IMR-90 (cell line): ENCODE measurements at regions of chr10 and their contacts with region 1.

Region 1: DNA sequence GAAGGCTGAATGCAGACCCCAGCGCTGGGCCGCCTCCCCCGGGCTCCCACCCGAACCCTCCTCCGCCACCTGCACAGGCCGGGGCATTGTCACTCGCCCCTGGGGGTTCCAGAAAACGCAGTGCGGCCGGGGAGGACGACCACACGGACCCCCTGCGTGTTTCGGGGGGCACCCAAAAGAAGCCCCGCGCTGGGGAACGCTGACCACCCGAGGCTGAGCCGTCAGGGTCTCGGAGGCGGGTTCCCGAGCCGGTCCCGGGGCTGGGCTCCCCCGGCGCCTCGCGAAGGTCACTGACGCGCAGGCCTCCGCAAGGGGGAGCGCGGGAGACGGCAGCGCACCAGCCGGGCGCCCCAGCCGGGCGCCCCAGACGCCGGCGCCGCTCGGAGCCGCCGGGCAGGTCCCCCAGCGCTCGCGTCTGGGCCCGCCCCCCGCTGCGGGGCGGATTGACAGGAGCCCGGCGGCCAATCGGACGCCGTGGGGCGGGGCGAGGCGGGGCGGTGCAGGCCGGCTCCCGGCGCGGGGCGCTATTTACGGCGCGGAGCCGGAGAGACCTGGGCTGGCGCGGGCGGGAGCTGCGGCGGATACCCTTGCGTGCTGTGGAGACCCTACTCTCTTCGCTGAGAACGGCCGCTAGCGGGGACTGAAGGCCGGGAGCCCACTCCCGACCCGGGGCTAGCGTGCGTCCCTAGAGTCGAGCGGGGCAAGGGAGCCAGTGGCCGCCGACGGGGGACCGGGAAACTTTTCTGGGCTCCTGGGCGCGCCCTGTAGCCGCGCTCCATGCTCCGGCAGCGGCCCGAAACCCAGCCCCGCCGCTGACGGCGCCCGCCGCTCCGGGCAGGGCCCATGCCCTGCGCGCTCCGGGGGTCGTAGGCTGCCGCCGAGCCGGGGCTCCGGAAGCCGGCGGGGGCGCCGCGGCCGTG is at the start of gene BAMBI:
- DNase-seq: peak; percentile 89
- ATAC-seq: peak; percentile 96
- H3K4me3 ChIP-seq: peak within 1 kb of the TSS; percentile 89
- H3K27ac ChIP-seq: peak within 1 kb of the TSS; percentile 44
- H3K4me1 ChIP-seq: peaks cover 6% of the 10 kb centered on the region
- H3K27me3 ChIP-seq: peaks cover 34% of the 10 kb centered on the region
- CTCF ChIP-seq: peak; percentile 83
- POLR2A ChIP-seq: peak; percentile 97
- RAD21 ChIP-seq: peak; percentile 78
- total RNA-seq, gene BAMBI: 19.4 and 20.8 TPM in 2 replicates

Region 2: DNA sequence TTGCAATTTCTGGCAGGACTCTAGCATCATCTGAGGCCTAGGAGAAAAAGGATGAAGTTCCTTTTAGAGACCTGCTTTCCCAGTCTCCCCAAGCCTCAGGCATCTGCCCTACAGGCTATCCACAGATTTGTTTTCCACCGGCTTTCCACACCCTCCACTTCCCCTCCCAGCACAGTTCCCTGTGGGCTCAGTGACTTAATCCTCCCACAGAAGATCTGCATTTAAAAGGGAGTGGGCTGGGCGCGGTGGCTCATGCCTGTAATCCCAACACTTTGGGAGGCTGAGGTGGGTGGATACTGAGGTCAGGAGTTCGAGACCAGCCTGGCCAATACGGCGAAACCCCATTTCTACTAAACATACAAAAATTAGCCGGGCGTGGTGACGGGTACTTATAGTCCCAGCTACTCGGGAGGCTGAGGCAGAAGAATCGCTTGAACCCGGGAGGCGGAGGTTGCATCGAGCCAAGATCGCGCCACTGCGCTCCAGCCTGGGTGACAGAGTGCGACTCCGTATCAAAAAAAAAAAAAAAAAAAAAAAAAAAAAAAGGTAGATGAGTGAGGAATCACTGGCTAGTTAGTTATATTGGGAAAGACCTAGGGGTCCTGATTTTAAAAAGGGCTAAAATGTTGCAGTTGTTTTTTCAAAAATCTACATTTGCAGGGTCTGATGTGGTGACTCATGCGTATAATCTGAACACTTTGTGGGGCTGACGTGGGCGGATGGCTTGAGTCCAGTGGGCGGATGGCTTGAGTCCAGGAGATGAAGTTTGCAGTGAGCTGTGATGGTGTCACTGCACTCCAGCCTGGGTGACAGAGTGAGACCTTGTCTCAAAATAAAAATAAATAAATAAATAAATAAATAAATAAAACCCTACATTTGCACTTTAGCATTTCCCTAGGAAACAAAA is 119.6 kb after region 1 on chr10:
- CTCF ChIA-PET with region 1: no interaction called
- POLR2A ChIA-PET with region 1: no interaction called
- dilution Hi-C with region 1: no loop called
- in situ Hi-C with region 1: loop called (anchors 25 kb)
- intact Hi-C with region 1: no loop called
- DNase-seq: peak; percentile 83
- ATAC-seq: peak; percentile 35; the same call in 1 of the 2 replicates
- H3K4me3 ChIP-seq: no peak overlapping the region
- H3K27ac ChIP-seq: no peak overlapping the region
- H3K4me1 ChIP-seq: peaks cover 2% of the 10 kb centered on the region; the same call in 1 of the 2 replicates
- H3K27me3 ChIP-seq: peaks cover 8% of the 10 kb centered on the region
- CTCF ChIP-seq: no peak
- POLR2A ChIP-seq: no peak
- RAD21 ChIP-seq: no peak

Region 3: DNA sequence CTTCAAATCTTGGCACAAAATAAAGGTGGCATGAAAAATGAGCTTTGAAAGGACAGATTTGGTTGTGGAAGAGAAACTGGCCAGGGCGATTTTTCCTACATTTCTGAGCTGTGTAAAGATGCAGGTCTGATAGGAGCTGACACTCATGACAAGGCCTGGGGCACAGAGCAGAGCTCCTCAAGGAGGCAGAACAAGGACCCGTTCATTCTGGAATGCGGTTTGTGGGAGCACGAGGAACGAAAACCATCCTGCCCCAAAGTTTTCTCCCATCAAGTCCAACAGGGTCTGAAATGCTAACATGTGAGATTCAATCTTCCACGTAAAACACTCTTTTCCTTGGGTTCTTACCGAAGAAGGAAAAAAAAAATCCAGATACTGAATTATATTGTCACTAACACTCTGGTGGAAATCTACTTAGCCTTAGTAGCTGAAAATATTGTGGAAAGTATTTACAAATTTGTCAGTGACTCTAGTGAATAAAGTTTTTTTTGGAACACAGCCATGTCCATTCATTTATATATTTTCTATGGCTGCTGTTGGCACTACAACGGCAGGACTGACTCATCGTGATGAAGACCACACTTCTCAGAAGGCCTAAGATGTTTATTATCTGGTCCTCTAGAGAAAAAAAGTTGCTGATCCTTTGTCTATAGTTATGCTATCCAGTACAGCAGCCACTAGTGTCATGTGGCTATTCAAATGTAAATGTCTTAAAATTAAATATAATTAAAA is 215.8 kb after region 1 on chr10:
- CTCF ChIA-PET with region 1: no interaction called
- POLR2A ChIA-PET with region 1: no interaction called
- dilution Hi-C with region 1: no loop called
- in situ Hi-C with region 1: no loop called
- intact Hi-C with region 1: loop called (anchors 5 kb)
- DNase-seq: peak; percentile 86
- ATAC-seq: peak; percentile 88
- H3K4me3 ChIP-seq: no peak overlapping the region
- H3K27ac ChIP-seq: no peak overlapping the region
- H3K4me1 ChIP-seq: peaks cover 6% of the 10 kb centered on the region
- H3K27me3 ChIP-seq: no peaks in the 10 kb centered on the region
- CTCF ChIP-seq: no peak
- POLR2A ChIP-seq: no peak
- RAD21 ChIP-seq: no peak

Region 4: DNA sequence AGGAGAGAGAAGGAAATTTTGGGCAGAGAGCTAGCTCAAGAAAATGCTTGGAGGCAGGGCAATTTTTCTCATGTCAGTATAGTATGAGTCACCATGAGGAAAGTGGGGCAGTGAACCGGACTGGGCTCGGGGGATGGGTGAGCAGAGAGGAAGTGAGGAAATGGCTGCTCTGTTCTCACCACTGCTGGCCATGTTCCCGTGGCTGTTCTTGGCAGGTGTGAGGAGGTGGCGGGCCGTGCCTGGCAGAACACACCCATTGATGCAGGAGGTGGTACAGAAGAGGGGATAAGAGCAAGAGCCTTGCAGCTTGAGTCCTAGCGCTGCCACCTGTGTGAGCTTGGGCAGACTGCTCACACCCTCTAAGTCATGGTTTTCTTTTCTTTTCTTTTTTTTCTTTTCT is 307.2 kb after region 1 on chr10:
- CTCF ChIA-PET with region 1: no interaction called
- POLR2A ChIA-PET with region 1: no interaction called
- dilution Hi-C with region 1: no loop called
- in situ Hi-C with region 1: loop called (anchors 10 kb)
- intact Hi-C with region 1: no loop called
- DNase-seq: peak; percentile 85
- ATAC-seq: peak; percentile 99
- H3K4me3 ChIP-seq: no peak overlapping the region
- H3K27ac ChIP-seq: no peak overlapping the region
- H3K4me1 ChIP-seq: peaks cover 4% of the 10 kb centered on the region
- H3K27me3 ChIP-seq: no peaks in the 10 kb centered on the region; the same call in 1 of the 2 replicates
- CTCF ChIP-seq: no peak
- POLR2A ChIP-seq: no peak
- RAD21 ChIP-seq: peak; percentile 37

Region 5: GRCh38 chr10:29039677-29040189 is 362.5 kb after region 1 on chr10:
- CTCF ChIA-PET with region 1: interaction called, 4 read pairs
- POLR2A ChIA-PET with region 1: no interaction called
- dilution Hi-C with region 1: no loop called
- in situ Hi-C with region 1: no loop called
- intact Hi-C with region 1: loop called (anchors 1 kb)
- DNase-seq: peak; percentile 87
- ATAC-seq: peak; percentile 82
- H3K4me3 ChIP-seq: no peak overlapping the region
- H3K27ac ChIP-seq: peak overlapping the region; percentile 67; the same call in 1 of the 2 replicates
- H3K4me1 ChIP-seq: peaks cover 23% of the 10 kb centered on the region
- H3K27me3 ChIP-seq: no peaks in the 10 kb centered on the region
- CTCF ChIP-seq: no peak
- POLR2A ChIP-seq: no peak
- RAD21 ChIP-seq: no peak

Region 6: DNA sequence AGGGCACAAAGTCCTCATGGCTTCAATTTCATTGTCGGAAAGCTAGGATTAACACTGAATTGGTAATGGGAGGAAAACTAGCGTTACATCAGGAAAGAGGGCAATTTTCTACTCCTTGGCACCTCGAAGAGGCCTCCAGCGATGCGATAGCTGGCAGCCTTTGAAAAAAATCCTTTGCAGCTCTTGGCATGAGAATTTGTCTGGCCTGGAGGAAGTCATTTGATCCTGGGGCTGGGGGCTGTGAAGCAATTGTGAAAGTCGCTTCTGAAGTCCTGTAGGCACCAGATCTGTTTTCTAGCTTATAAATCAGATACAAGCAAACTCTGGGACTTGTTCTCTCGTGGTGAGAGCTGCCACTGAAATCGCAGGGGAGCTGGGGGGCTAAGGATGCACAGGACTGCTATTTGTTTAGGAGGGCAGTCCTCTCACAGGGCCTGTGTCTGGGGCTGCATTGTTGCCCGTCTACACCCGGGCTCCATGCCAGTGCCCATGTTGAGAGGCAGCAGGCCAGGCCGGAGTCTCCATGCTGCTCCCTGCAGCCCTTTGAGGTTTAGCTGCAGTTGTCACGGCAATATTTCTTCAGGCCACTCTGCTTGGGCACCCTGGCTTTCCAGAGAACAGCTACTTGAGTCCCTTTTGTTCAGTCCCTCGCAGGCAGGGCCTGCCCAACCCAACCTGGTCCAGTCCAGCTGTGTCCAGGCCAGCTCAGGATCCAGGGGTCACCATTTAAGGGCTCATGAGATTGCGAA is 404.9 kb after region 1 on chr10:
- CTCF ChIA-PET with region 1: no interaction called
- POLR2A ChIA-PET with region 1: no interaction called
- dilution Hi-C with region 1: no loop called
- in situ Hi-C with region 1: no loop called
- intact Hi-C with region 1: no loop called
- DNase-seq: no peak
- ATAC-seq: no peak
- H3K4me3 ChIP-seq: no peak overlapping the region
- H3K27ac ChIP-seq: no peak overlapping the region
- H3K4me1 ChIP-seq: no peaks in the 10 kb centered on the region
- H3K27me3 ChIP-seq: peaks cover 17% of the 10 kb centered on the region
- CTCF ChIP-seq: no peak
- POLR2A ChIP-seq: no peak
- RAD21 ChIP-seq: no peak

Region 7: GRCh38 chr10:29131952-29132820 is 455.0 kb after region 1 on chr10:
- CTCF ChIA-PET with region 1: no interaction called
- POLR2A ChIA-PET with region 1: interaction called, 3 read pairs
- dilution Hi-C with region 1: no loop called
- in situ Hi-C with region 1: loop called (anchors 5 kb)
- intact Hi-C with region 1: loop called (anchors 2 kb)
- DNase-seq: peak; percentile 19
- ATAC-seq: peak; percentile 49; the same call in 1 of the 2 replicates
- H3K4me3 ChIP-seq: no peak overlapping the region
- H3K27ac ChIP-seq: no peak overlapping the region
- H3K4me1 ChIP-seq: peaks cover 15% of the 10 kb centered on the region
- H3K27me3 ChIP-seq: peaks cover 3% of the 10 kb centered on the region
- CTCF ChIP-seq: no peak
- POLR2A ChIP-seq: no peak
- RAD21 ChIP-seq: no peak

Region 8: GRCh38 chr10:29304264-29305030 is 627.2 kb after region 1 on chr10:
- CTCF ChIA-PET with region 1: interaction called, 3 read pairs
- POLR2A ChIA-PET with region 1: no interaction called
- dilution Hi-C with region 1: no loop called
- in situ Hi-C with region 1: no loop called
- intact Hi-C with region 1: loop called (anchors 1 kb)
- DNase-seq: peak; percentile 70
- ATAC-seq: peak; percentile 98
- H3K4me3 ChIP-seq: no peak overlapping the region
- H3K27ac ChIP-seq: no peak overlapping the region
- H3K4me1 ChIP-seq: no peaks in the 10 kb centered on the region
- H3K27me3 ChIP-seq: no peaks in the 10 kb centered on the region; the same call in 1 of the 2 replicates
- CTCF ChIP-seq: peak; percentile 91
- POLR2A ChIP-seq: no peak
- RAD21 ChIP-seq: peak; percentile 93